Activated CD4-positive, alpha-beta T cell treated with anti-CD3 and anti-CD28 coated beads for 36 hours (primary cell): ENCODE measurements at regions of chr6 and their contacts with region 1.

Region 1: DNA sequence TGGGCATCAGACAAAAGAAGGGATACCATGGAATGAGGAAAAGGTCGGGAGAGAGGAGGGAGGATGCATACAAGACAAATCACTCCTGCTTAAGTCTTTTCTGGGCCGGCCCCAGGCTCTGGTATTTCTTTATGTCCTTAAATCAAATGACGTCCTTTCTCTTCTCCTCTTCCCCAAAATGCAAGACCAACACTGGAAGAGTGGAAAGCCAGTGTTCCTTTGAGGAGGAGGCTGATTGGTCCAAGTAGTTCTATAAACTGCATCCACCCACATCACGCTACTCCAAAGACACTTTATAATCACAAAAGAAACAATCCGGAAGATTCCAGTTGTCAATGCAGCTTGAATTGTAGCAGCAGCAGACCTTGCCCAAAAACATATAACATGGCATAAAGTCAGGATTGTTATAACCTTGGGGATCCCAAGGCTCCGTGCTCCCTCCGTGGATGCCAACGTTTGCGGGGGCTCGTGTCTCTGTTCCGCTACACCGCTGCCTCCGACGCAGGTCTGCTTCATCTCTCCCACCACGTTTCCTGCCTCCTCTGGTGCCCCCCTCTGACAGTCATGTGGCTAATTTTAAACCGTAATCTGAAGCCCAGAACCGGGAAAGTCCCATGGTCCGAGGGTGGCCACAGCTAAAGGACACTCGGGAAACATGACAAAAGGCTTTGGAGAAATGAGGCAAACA is 47.1 kb downstream of the MCUR1 start:
- DNase-seq: peak; percentile 47
- ATAC-seq: no peak
- H3K4me3 Mint-ChIP-seq: peak overlapping the region; percentile 63
- H3K27ac Mint-ChIP-seq: peak overlapping the region; percentile 65
- H3K4me1 Mint-ChIP-seq: peaks cover 40% of the 10 kb centered on the region
- H3K27me3 Mint-ChIP-seq: no peaks in the 10 kb centered on the region

Region 2: DNA sequence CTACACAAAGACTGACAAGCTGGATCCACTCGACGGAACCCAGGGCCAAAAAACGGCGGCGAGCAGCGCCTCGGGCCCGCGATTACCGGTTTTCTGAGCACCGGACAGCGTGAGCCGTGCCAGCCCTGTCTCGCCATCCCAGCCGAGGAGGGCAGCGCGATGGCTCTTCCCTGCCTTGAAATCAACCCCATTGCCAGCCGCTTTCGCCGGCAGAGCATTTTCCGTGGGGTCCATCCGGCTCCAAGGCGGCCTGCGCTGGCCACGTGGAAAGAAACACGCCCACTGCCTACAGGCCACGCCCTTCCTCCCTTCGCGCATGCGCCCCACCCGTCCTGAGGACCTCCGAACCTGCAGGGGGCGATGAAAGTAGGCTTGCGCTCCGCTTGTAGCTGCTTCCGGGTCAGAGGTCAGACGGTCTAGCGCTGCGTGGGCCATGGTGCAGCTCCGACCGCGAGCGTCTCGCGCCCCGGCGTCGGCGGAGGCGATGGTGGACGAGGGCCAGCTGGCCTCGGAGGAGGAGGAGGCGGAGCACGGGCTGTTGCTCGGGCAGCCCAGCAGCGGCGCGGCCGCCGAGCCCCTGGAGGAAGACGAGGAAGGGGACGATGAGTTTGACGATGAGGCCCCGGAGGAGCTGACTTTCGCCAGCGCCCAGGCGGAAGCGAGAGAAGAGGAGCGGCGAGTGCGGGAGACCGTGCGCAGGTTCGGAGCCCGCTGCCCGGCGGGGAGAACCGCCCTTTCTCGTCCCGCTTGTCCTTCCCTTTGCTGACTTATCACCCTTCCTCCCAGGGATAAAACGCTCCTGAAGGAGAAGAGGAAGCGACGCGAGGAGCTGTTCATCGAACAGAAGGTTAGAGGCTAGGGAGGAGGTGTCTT is 152.1 kb before region 1 on chr6 and contains the start of gene NOL7:
- CTCF ChIA-PET with region 1: interaction called, 6 read pairs
- POLR2A ChIA-PET with region 1: no interaction called
- intact Hi-C with region 1: loop called (anchors 2 to 5 kb)
- DNase-seq: peak; percentile 99
- ATAC-seq: peak; percentile 92
- H3K4me3 Mint-ChIP-seq: peak within 1 kb of the TSS; percentile 92
- H3K27ac Mint-ChIP-seq: peak within 1 kb of the TSS; percentile 90
- H3K4me1 Mint-ChIP-seq: peaks cover 44% of the 10 kb centered on the region
- H3K27me3 Mint-ChIP-seq: no peaks in the 10 kb centered on the region
- total RNA-seq, gene NOL7: 92.8 to 97.3 TPM

Region 3: DNA sequence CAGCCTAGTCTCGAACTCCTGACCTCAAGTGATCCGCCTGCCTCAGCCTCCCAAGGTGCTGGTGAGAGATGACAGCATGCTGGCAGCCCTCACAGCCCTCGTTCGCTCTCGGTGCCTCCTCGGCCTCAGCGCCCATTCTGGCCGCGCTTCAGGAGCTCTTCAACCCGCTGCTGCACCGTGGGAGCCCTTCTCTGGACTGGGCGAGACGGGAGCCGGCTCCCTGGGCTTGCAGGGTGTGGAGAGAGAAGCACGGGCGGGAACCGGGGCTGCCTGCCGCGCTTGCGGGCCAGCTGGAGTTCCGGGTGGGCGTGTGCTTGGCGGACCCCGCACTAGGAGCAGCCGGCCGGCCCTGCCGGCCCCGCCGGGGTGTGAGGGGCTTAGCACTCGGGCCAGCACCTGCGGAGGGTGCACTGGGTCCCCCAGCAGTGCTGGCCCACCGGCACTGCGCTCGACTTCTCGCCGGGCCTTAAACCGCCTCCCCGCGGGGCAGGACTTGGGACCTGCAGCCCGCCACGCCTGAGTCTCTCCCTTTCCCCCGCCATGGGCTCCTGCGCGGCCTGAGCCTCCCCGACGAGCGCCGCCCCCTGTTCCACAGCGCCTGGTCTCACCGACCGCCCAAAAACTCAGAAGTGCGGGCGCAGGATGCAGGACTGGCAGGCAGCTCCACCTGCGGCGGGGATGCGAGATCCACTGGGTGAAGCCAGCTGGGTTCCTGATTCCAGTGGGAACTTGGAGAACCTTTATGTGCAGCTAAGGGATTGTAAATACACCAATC is 24.1 kb before region 1 on chr6:
- CTCF ChIA-PET with region 1: no interaction called
- POLR2A ChIA-PET with region 1: no interaction called
- intact Hi-C with region 1: loop called in 1 of 2 experiments (anchors 1 kb)
- DNase-seq: no peak
- ATAC-seq: no peak
- H3K4me3 Mint-ChIP-seq: peak overlapping the region; percentile 39
- H3K27ac Mint-ChIP-seq: no peak overlapping the region
- H3K4me1 Mint-ChIP-seq: peaks cover 8% of the 10 kb centered on the region
- H3K27me3 Mint-ChIP-seq: peaks cover 3% of the 10 kb centered on the region

Region 4: GRCh38 chr6:13795041-13795750 is 27.9 kb after region 1 on chr6:
- CTCF ChIA-PET with region 1: interaction called, 8 read pairs
- POLR2A ChIA-PET with region 1: interaction called, 3 read pairs
- intact Hi-C with region 1: loop called (anchors 2 kb)
- DNase-seq: peak; percentile 94
- ATAC-seq: peak; percentile 97
- H3K4me3 Mint-ChIP-seq: no peak overlapping the region
- H3K27ac Mint-ChIP-seq: peak overlapping the region; percentile 66
- H3K4me1 Mint-ChIP-seq: peaks cover 23% of the 10 kb centered on the region
- H3K27me3 Mint-ChIP-seq: no peaks in the 10 kb centered on the region

Region 5: DNA sequence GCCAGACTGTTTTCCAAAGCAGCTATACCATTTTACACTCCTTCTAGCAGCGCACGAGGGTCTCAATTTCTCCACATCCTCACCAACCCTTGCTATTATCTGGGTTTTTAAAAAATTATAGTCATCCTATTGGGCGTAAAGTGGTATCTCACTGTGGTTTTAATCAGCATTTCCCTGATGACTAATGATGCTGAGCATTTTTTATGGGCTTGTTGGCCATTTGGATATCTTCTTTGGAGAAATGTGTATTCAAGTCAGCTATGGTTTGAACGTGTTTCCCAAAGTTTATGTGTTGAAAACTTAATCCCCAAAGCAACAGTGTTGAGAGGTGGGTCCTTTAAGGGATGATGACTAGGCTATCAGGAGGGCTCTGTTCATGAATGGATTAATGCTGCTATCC is 40.4 kb after region 1 on chr6:
- CTCF ChIA-PET with region 1: no interaction called
- POLR2A ChIA-PET with region 1: no interaction called
- intact Hi-C with region 1: no loop called
- DNase-seq: no peak
- ATAC-seq: no peak
- H3K4me3 Mint-ChIP-seq: no peak overlapping the region
- H3K27ac Mint-ChIP-seq: no peak overlapping the region
- H3K4me1 Mint-ChIP-seq: peaks cover 16% of the 10 kb centered on the region
- H3K27me3 Mint-ChIP-seq: no peaks in the 10 kb centered on the region

Region 6: DNA sequence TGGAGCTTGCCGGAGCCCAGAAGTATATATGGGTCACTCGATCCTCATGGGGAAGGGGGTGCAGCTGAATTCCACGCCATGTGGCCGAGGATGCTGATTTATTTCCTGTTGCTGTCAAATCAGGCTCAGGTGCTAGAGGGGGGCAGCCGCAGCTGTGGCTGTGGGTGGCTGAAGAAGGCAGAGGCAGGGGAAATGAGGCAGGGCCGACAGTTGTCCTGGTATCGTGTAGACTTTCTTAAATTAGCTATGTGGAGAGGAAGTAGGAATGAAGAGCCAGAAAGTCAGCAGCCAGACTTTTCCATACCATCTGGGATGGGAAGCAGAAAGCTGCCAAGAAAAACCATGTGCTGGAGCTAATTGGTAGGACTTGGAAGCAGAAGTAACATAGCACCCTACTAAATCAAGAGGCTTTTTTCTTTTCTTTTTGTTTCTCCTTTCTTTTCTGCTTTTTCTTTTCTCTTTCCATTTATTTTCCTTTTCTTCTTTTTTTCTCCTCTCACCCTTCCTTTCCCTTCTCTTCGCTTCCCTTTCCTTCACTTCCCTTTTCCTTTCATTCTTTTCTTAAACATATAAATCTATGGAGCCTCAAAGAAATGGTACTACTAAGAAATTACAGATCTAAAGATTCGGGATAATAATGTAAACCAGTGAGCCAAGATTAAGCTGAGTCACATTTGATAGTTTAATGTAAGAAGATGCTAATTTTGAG is 259.7 kb after region 1 on chr6:
- CTCF ChIA-PET with region 1: no interaction called
- POLR2A ChIA-PET with region 1: no interaction called
- intact Hi-C with region 1: no loop called
- DNase-seq: no peak
- ATAC-seq: no peak
- H3K4me3 Mint-ChIP-seq: no peak overlapping the region
- H3K27ac Mint-ChIP-seq: no peak overlapping the region
- H3K4me1 Mint-ChIP-seq: no peaks in the 10 kb centered on the region
- H3K27me3 Mint-ChIP-seq: peaks cover 11% of the 10 kb centered on the region